ENCODE measurements at regions of chr15 and their contacts with region 1.

Region 1: GRCh38 chr15:77496710-77497103 is 76.0 kb downstream of the HMG20A start:
- DNase-seq: peak; percentile 75 to 89
- ATAC-seq: peak; percentile 84 to 97
- H3K4me3 ChIP-seq: no peak overlapping the region
- H3K27ac ChIP-seq: peak overlapping the region in 1 of 2 experiments; percentile 41; a peak in 3 of 6 replicates
- H3K4me1 ChIP-seq: peaks cover 11% of the 10 kb centered on the region; the same call in 2 of the 3 replicates
- CTCF ChIP-seq: peak; percentile 97
- EP300 ChIP-seq: no peak
- POLR2A ChIP-seq: no peak
- RAD21 ChIP-seq: peak; percentile 95 to 97

Region 2: DNA sequence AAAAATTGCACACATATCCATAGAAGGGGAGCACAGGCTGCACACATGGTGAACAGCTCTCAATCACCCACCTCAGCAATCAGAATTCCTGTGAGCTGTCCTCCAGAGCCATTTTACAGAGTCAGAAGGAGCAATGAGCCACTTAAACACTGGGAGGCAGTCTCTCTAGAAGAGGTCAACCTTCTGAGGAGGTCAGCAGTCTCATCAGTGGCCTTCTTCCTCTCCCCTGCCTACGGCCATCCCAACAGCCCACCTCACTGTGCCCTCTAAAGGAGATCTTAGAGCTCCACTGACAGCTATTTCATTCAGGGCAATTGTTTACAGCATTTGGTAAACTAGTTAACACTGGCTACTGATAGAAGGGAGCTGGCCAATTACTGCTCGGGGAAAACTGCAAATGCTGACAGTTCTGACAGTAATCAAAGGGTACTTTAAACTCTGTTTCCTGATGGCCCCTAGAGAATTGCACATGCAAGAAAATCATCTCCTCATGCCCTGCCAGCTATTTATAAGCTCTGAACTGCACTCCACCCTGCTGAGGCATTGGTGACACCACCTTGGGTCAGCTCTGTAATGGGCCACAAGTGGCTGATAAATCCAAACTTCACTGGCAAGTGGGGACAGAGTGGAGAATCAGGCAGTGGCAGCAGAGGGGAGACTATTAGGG is 383.7 kb before region 1 on chr15:
- CTCF ChIA-PET with region 1: interaction called, 192 read pairs
- POLR2A ChIA-PET with region 1: no interaction called
- DNase-seq: no peak
- ATAC-seq: peak; percentile 45 to 79; a peak in 4 of 6 replicates
- H3K4me3 ChIP-seq: no peak overlapping the region
- H3K27ac ChIP-seq: no peak overlapping the region
- H3K4me1 ChIP-seq: no peaks in the 10 kb centered on the region
- CTCF ChIP-seq: no peak
- EP300 ChIP-seq: no peak
- POLR2A ChIP-seq: no peak
- RAD21 ChIP-seq: no peak

Region 3: DNA sequence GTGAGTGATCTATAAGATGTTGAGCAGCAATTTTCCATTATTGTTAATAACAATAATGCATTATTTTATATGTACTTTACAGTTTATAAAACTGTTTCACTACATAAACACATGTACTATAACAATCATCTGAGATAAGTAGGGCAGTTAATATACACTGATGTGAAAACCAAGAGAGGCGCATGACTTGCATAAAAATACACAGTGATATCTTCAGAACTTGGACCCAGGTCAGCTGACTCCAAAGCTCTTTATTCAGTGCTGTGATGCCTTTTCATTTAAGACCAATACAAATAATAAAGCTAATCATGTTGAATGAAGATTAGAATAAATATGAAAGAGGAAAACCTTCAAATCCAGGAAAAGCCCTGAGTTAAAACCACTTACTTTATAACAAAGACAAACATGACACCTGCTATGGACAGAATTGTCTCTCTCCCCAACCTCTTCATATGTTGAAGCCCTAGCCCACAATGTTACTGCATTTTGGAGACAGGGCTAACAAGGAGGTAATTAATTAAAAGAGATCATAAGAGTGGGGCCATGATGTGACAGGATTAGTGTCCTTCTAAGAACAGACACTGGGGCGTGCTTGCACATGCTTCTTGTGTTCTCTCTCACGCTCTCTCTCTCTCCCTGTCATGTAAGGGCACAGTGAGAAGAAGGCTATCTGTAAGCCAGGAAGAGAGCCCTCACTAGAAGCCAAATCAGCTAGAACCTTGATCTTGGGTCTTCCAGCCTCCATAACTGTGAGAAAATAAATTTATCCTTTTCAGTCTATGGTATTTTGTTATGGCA is 370.0 kb before region 1 on chr15:
- CTCF ChIA-PET with region 1: interaction called, 192 read pairs
- POLR2A ChIA-PET with region 1: no interaction called
- DNase-seq: no peak
- ATAC-seq: no peak
- H3K4me3 ChIP-seq: no peak overlapping the region
- H3K27ac ChIP-seq: no peak overlapping the region
- H3K4me1 ChIP-seq: no peaks in the 10 kb centered on the region
- CTCF ChIP-seq: no peak
- EP300 ChIP-seq: no peak
- POLR2A ChIP-seq: no peak
- RAD21 ChIP-seq: no peak

Region 4: DNA sequence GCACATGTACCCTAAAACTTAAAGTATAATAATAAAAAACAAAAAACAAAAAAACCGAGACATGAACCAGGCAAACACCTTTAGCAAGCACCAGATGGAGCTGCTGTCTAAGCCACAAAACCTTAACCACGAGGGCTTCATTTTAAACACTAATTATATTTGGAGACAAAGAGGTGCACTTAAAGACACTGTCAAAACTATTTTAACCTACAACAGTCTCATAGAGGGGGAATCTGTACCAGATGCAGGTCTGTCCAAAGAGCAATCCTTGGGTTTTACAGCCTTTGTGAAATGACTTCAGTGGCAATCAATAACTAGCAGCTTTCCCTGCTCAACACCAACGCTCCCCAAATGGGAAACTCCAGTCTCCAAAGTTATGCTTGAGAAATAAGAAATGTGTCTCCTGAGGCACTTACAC is 310.1 kb before region 1 on chr15:
- CTCF ChIA-PET with region 1: interaction called, 41 read pairs
- POLR2A ChIA-PET with region 1: interaction called, 3 read pairs
- DNase-seq: peak in 1 of 2 experiments; percentile 42
- ATAC-seq: peak in 1 of 2 experiments; percentile 50; a peak in 1 of 6 replicates
- H3K4me3 ChIP-seq: no peak overlapping the region
- H3K27ac ChIP-seq: no peak overlapping the region
- H3K4me1 ChIP-seq: peaks cover 5% of the 10 kb centered on the region; the same call in 1 of the 3 replicates
- CTCF ChIP-seq: peak; percentile 63
- EP300 ChIP-seq: no peak
- POLR2A ChIP-seq: no peak
- RAD21 ChIP-seq: peak; percentile 77 to 78

Region 5: GRCh38 chr15:77482570-77482969 is 14.1 kb before region 1 on chr15:
- CTCF ChIA-PET with region 1: interaction called, 26 read pairs
- POLR2A ChIA-PET with region 1: interaction called, 3 read pairs
- DNase-seq: no peak
- ATAC-seq: no peak
- H3K4me3 ChIP-seq: no peak overlapping the region
- H3K27ac ChIP-seq: no peak overlapping the region
- H3K4me1 ChIP-seq: peaks cover 9% of the 10 kb centered on the region; the same call in 2 of the 3 replicates
- CTCF ChIP-seq: no peak
- EP300 ChIP-seq: no peak
- POLR2A ChIP-seq: no peak
- RAD21 ChIP-seq: no peak

Region 6: DNA sequence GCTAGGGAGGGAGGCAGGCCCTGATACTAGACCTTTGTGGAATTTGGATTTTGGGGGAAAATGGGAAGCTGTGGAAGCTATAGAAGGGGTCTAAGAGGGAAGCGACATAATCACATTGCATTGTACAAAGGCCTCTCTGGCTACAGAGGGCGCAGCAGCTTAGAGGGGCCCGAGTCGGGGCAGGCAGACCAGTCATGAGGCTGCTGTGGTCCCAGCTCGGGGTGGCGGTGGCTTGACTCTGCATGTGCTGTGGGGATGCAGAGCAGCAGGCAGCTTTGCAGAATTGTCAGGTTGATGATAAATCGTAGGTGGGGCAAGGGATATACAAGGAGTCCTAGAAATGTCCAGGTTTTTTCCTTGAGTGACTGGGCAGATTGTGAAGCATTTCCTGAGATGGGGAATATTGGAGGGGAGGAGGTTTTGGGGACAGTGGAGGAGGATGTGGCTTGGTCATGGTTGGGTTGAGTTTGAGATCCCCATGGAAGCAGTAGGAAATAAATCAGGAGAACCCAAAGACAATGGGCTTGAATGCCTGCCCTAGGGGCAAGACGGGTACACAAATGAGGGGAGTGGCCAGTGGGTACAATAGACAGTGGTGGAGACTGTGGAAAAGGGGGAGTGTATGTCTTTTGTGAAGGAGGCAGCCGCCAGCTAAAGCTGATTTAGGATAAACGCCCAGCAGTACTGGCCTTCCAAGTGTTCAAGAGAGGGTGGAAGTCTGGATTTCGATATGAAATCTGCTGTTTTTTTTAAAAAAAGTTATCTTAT is 18.1 kb after region 1 on chr15:
- CTCF ChIA-PET with region 1: interaction called, 57 read pairs
- POLR2A ChIA-PET with region 1: no interaction called
- DNase-seq: no peak
- ATAC-seq: no peak; a peak in 1 of 6 replicates
- H3K4me3 ChIP-seq: no peak overlapping the region
- H3K27ac ChIP-seq: no peak overlapping the region
- H3K4me1 ChIP-seq: no peaks in the 10 kb centered on the region
- CTCF ChIP-seq: no peak
- EP300 ChIP-seq: no peak
- POLR2A ChIP-seq: no peak
- RAD21 ChIP-seq: no peak